ENCODE measurements at regions of chr4 and their contacts with region 1.

Region 1: DNA sequence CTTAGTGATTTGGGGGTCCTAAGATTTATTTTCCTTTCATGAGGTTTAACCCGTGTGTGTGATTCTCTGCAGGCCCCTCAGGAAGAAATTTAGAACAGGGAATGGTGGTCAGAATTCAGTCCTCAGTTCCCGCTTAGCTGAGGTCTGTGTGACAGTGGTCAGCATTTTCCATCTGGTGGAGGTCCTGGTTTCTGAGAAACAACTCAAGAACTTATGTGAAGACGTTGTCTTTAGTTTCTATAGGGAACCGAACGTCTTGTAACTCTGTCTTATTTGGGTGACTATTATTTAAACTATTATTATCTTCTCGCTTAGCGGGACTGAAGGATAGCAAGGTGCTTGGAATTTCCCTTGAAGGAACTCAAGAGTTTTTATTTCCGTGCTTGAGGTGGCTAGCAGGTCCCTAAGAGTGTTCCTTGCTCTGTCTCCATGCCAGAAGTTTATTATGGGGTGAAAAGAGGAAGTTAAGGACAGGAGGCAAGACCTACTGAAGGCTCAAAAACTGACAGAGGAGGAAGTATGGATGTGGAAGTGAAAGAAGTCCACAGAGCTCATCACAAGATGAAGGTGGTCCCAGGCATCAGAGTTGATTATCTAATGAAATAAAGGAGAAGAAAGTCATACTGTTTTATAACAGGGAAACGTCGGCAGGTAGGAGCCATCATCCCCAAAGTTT is 9.4 kb downstream of the MGST2 start:
- DNase-seq: no peak

Region 2: GRCh38 chr4:139628184-139629012 is 46.6 kb before region 1 on chr4:
- in situ Hi-C with region 1: loop called (anchors 5 kb)
- DNase-seq: peak; percentile 12

Measured in G401 (cell line).